AG04450 (cell line): ENCODE measurements at regions of chr3 and their contacts with region 1.

Region 1: DNA sequence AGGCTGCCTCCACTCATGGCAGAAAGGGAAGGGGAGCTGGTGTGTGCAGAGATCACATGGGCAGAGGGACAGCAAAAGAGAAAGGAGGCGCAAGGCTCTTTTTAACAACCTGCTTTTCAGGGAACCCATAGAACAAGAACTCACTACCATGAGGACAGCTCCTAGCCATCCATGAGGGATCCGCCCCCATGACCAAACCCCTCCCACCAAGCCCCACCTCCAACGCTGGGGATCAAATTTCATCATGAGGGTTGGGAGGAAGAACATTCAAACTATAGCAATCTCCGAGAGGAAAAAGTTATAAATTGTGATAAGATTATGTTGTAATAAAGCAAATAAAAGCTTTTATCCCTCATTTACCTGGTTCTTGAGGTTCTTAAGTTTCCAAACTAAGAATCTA is 84.7 kb upstream of the LMCD1 start:
- DNase-seq: no peak
- H3K4me3 ChIP-seq: no peak overlapping the region
- H3K27ac ChIP-seq: no peak overlapping the region
- H3K27me3 ChIP-seq: peaks cover 4% of the 10 kb centered on the region
- CTCF ChIP-seq: no peak

Region 2: DNA sequence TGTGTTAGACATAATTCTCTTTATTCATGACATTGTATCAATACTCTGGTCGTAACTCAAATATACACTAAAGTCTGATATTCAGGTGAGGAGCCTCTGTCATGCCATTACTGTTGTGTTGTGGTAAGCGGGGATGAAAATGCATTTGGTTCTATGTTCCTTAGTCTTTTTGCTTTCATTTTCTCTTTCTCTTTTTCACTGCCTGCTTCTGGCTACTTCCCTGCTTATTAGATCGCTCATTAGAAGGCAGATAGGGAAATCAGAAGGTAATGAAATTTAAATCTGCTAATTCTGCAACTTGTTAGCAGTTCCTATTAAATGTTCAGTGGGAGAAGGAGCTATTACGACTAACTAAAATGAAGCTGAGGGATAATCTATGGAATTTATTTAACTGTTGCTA is 1211.0 kb before region 1 on chr3:
- CTCF ChIA-PET with region 1: interaction called, 11 read pairs
- POLR2A ChIA-PET with region 1: no interaction called
- DNase-seq: no peak
- H3K4me3 ChIP-seq: no peak overlapping the region
- H3K27ac ChIP-seq: no peak overlapping the region
- H3K27me3 ChIP-seq: no peaks in the 10 kb centered on the region
- CTCF ChIP-seq: no peak

Region 3: DNA sequence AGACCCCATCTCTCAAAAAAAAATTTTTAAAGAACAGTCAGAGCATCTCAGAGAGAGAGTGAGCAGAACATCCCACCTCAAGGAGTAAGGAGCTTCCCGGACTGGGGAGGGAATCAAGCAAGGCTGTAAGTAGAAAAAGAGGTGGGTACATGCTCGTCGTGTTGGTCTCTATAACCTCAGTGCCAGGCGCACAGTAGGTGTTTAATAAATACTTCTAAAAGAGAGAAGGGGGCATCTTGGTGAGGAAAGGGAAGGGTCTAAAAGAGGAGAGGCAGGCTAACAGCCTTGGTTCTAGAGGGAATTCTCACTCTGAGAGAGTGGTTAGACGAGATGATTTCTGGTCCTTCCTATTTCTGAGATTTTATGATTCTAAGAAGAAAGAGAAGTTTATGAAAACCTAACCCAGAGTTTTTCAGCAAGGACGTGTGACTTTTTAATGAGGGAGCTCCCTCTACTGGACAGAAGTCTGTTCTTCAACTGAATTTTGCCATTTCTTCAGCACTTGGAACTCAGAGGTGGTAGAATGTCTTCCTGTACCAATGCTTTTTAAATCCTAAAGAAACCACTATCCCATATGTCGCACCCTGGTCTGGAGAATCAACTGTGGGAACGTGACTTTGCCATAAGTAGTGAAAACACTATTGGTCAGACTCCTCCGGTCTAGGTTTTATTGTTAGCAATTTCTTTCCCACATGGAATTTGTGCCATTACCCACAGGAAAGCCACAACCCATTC is 115.1 kb before region 1 on chr3:
- CTCF ChIA-PET with region 1: interaction called, 11 read pairs
- POLR2A ChIA-PET with region 1: no interaction called
- DNase-seq: peak; percentile 20
- H3K4me3 ChIP-seq: no peak overlapping the region
- H3K27ac ChIP-seq: no peak overlapping the region
- H3K27me3 ChIP-seq: peaks cover 2% of the 10 kb centered on the region
- CTCF ChIP-seq: peak; percentile 76

Region 4: GRCh38 chr3:8400911-8401310 is 16.1 kb before region 1 on chr3:
- CTCF ChIA-PET with region 1: interaction called, 27 read pairs
- POLR2A ChIA-PET with region 1: no interaction called
- DNase-seq: no peak
- H3K4me3 ChIP-seq: no peak overlapping the region
- H3K27ac ChIP-seq: no peak overlapping the region
- H3K27me3 ChIP-seq: no peaks in the 10 kb centered on the region
- CTCF ChIP-seq: no peak

Region 5: GRCh38 chr3:8441969-8442559 is 25.1 kb after region 1 on chr3:
- CTCF ChIA-PET with region 1: interaction called, 15 read pairs
- POLR2A ChIA-PET with region 1: no interaction called
- DNase-seq: peak; percentile 48
- H3K4me3 ChIP-seq: no peak overlapping the region
- H3K27ac ChIP-seq: no peak overlapping the region
- H3K27me3 ChIP-seq: no peaks in the 10 kb centered on the region
- CTCF ChIP-seq: peak; percentile 88

Region 6: GRCh38 chr3:8622873-8623691 is 206.1 kb after region 1 on chr3:
- CTCF ChIA-PET with region 1: interaction called, 25 read pairs
- POLR2A ChIA-PET with region 1: no interaction called
- DNase-seq: peak; percentile 36
- H3K4me3 ChIP-seq: no peak overlapping the region
- H3K27ac ChIP-seq: no peak overlapping the region
- H3K27me3 ChIP-seq: no peaks in the 10 kb centered on the region
- CTCF ChIP-seq: peak; percentile 94

Region 7: DNA sequence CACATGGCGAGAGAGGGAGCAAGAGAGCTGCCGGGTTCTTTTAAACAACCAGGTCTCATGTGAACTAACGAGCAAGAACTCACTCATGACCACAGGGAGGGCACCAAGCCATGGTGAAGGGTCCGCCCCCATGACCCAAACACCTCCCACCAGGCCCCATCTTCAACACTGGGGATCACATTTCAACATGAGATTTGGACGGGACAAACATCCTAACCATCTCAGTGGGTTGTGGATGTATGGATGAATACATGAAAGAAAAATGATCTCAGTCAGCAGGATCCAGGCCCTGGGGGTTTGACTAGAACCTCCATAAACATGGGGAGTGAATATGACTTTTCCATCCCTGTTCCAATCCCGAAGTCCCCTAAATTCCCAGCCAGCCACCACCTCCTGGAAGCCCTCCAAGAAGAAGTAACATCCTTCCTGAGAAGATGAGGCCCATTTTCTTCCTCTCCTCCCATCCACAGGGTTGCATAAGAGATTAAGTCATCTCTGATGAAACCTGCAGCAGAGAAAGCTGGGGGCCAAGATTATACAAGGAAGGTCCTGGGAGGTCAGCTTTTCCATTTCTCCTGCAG is 326.1 kb after region 1 on chr3:
- CTCF ChIA-PET with region 1: no interaction called
- POLR2A ChIA-PET with region 1: no interaction called
- DNase-seq: peak; percentile 23
- H3K4me3 ChIP-seq: no peak overlapping the region
- H3K27ac ChIP-seq: peak overlapping the region; percentile 65
- H3K27me3 ChIP-seq: no peaks in the 10 kb centered on the region
- CTCF ChIP-seq: no peak